PC-9 (cell line): ENCODE measurements at regions of chr6 and their contacts with region 1.

Region 1: GRCh38 chr6:18264219-18264922 is at the start of gene DEK:
- DNase-seq: peak; percentile 56 to 84
- H3K4me3 ChIP-seq: peak within 1 kb of the TSS; percentile 97
- H3K27ac ChIP-seq: peak within 1 kb of the TSS; percentile 73
- H3K4me1 ChIP-seq: peaks cover 41% of the 10 kb centered on the region
- H3K27me3 ChIP-seq: no peaks in the 10 kb centered on the region
- CTCF ChIP-seq: peak; percentile 53; the same call in 1 of the 2 replicates
- total RNA-seq, gene DEK: 192 and 260 TPM in 2 replicates

Region 2: DNA sequence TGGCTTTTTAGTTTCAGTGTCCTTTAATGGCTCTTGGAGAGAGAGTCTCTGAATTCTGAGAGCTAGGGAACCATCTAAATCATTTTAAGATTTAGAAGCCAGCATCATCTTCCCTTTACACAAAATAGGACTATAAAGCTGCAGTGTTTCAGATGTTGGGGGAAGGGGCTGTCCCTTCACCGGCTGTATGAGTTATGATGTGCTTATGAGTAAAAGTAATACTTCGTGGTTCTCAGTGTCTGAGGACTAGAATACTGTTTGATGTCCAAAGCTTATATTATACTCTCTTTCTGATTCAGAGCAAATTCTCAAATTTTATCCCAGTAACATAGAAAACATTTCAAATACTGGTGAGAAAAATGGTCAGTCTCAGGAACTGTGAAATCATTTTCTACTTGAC is 727.8 kb before region 1 on chr6:
- CTCF ChIA-PET with region 1: interaction called, 11 read pairs
- POLR2A ChIA-PET with region 1: no interaction called
- intact Hi-C with region 1: no loop called
- DNase-seq: no peak
- H3K4me3 ChIP-seq: no peak overlapping the region
- H3K27ac ChIP-seq: no peak overlapping the region
- H3K4me1 ChIP-seq: no peaks in the 10 kb centered on the region
- H3K27me3 ChIP-seq: no peaks in the 10 kb centered on the region
- CTCF ChIP-seq: no peak

Region 3: GRCh38 chr6:17790489-17790888 is 473.9 kb before region 1 on chr6:
- CTCF ChIA-PET with region 1: no interaction called
- POLR2A ChIA-PET with region 1: no interaction called
- intact Hi-C with region 1: no loop called
- DNase-seq: no peak
- H3K4me3 ChIP-seq: no peak overlapping the region
- H3K27ac ChIP-seq: no peak overlapping the region
- H3K4me1 ChIP-seq: no peaks in the 10 kb centered on the region
- H3K27me3 ChIP-seq: no peaks in the 10 kb centered on the region
- CTCF ChIP-seq: no peak

Region 4: DNA sequence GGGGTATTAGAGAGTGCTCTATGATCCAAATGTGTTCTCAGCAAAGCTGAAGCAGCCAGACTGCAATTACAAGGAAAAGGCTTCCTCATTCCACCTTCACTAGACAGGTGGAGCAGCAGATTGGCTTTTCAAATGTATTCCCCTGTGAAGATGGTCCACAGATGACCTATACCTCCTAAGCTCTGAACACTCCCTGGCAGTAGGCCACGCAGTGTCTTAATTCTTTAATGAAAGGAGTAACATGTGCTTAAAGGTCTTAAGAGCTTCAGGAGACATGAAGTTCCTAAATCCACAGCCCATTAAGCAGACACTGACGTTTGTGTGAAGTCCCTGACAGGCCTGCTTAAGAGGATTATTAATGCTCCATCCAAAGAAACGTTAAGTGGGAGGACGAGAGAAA is 418.8 kb before region 1 on chr6:
- CTCF ChIA-PET with region 1: no interaction called
- POLR2A ChIA-PET with region 1: no interaction called
- intact Hi-C with region 1: no loop called
- DNase-seq: no peak
- H3K4me3 ChIP-seq: no peak overlapping the region
- H3K27ac ChIP-seq: no peak overlapping the region
- H3K4me1 ChIP-seq: no peaks in the 10 kb centered on the region
- H3K27me3 ChIP-seq: no peaks in the 10 kb centered on the region
- CTCF ChIP-seq: no peak

Region 5: GRCh38 chr6:18155150-18155863 is 109.1 kb before region 1 on chr6 and contains the start of gene KDM1B:
- CTCF ChIA-PET with region 1: no interaction called
- POLR2A ChIA-PET with region 1: no interaction called
- intact Hi-C with region 1: loop called (anchors 1 kb)
- DNase-seq: peak; percentile 88 to 99
- H3K4me3 ChIP-seq: peak within 1 kb of the TSS; percentile 95
- H3K27ac ChIP-seq: peak within 1 kb of the TSS; percentile 35
- H3K4me1 ChIP-seq: peaks cover 25% of the 10 kb centered on the region
- H3K27me3 ChIP-seq: no peaks in the 10 kb centered on the region
- CTCF ChIP-seq: no peak
- total RNA-seq, gene KDM1B: 15.6 and 21.5 TPM in 2 replicates

Region 6: GRCh38 chr6:18280079-18280478 is 15.7 kb after region 1 on chr6:
- CTCF ChIA-PET with region 1: no interaction called
- POLR2A ChIA-PET with region 1: no interaction called
- intact Hi-C with region 1: no loop called
- DNase-seq: peak; percentile 33 to 64
- H3K4me3 ChIP-seq: no peak overlapping the region
- H3K27ac ChIP-seq: no peak overlapping the region
- H3K4me1 ChIP-seq: peaks cover 12% of the 10 kb centered on the region; the same call in 1 of the 2 replicates
- H3K27me3 ChIP-seq: no peaks in the 10 kb centered on the region
- CTCF ChIP-seq: no peak

Region 7: GRCh38 chr6:18323935-18324705 is 59.7 kb after region 1 on chr6:
- CTCF ChIA-PET with region 1: no interaction called
- POLR2A ChIA-PET with region 1: no interaction called
- intact Hi-C with region 1: loop called (anchors 2 kb)
- DNase-seq: peak; percentile 27 to 51
- H3K4me3 ChIP-seq: no peak overlapping the region
- H3K27ac ChIP-seq: no peak overlapping the region
- H3K4me1 ChIP-seq: no peaks in the 10 kb centered on the region
- H3K27me3 ChIP-seq: no peaks in the 10 kb centered on the region
- CTCF ChIP-seq: peak; percentile 85

Region 8: DNA sequence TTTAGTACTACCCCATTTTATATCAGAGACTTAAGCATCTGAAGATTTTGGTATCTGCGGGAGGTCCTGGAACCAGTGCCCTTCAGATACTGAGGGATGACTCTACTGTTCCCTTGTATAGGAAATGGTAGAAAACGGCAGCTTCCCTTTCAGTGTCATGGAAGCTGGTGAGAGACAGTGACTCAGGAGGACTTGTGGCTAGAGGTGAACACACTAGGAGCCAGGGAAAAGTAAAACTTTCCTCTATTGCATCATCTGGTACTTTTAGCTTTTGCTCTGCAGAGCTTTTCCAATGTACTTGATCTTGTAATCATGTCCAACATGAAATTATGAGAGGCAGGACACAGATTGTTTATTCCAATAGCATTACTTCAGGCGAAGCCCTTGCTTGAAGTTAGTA is 167.8 kb after region 1 on chr6:
- CTCF ChIA-PET with region 1: no interaction called
- POLR2A ChIA-PET with region 1: no interaction called
- intact Hi-C with region 1: loop called (anchors 5 kb)
- DNase-seq: peak in 1 of 2 experiments; percentile 51
- H3K4me3 ChIP-seq: no peak overlapping the region
- H3K27ac ChIP-seq: peak overlapping the region; percentile 89
- H3K4me1 ChIP-seq: peaks cover 50% of the 10 kb centered on the region
- H3K27me3 ChIP-seq: no peaks in the 10 kb centered on the region
- CTCF ChIP-seq: no peak

Region 9: DNA sequence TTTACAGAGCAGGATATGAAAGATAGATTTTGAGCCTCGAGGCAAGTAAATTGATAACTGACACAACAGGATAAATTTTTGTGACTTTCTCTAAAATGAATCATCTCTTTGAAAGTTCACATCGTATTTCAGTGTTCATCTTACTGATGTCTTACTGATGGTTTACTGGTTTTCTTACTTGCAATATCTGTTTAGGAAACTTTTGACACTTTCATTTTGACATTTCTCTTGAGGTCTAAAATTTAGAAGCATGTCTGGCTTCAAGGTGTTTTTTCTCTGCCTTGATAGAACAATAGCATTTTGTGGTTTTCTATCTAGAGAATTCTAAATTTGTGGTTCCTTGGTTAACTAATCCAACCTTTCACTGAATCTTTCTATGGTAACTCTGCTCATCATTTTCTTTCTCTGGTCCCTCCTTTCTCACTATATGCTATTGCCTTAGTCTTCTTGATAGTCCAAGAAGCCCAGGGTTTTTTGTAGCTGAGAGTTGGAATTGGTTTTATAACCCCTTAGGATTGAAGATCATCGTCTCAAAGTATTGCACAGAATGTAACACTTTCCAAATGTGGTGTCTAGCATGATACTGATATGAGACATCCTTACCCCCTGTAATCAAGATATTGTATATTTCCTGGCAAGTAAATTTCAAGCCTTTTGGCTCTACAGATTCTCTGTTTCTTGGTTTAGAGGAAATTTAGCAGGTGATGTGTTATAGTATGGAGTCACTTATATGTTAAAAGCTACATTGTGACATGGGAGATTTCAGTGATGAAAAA is 221.5 kb after region 1 on chr6:
- CTCF ChIA-PET with region 1: no interaction called
- POLR2A ChIA-PET with region 1: no interaction called
- intact Hi-C with region 1: no loop called
- DNase-seq: no peak
- H3K4me3 ChIP-seq: no peak overlapping the region
- H3K27ac ChIP-seq: no peak overlapping the region
- H3K4me1 ChIP-seq: no peaks in the 10 kb centered on the region
- H3K27me3 ChIP-seq: no peaks in the 10 kb centered on the region
- CTCF ChIP-seq: no peak

Region 10: DNA sequence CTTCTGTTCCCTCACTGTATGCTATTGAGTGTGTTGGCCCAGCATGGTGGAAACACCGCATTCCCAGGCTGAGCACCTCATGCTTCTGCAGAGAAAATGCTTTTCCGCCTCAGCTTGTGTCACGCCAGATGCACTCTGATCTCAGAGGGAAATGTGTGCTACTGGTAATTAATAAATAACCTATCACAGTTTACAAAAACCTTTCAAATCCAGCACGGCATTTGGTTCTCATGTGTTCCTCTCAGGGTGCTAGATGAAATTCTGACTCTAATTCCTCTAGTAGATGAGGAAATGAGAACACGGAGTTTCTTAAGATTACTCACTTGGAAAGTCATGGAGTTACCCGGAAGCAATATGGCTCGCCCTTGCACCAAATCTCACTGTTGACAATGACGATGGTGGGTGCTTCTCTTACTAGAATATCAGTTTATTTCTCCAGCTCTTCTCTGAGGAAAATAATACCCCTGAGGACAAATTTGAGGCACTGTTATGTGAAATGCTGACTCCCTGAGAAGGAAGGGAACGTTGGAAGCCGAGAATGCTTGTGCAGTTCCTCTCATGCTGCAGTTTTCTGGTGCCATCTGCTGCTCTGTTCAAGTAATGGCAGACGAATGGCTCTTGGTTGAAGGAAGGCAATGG is 239.3 kb after region 1 on chr6:
- CTCF ChIA-PET with region 1: no interaction called
- POLR2A ChIA-PET with region 1: no interaction called
- intact Hi-C with region 1: loop called (anchors 1 kb)
- DNase-seq: peak; percentile 61 to 63
- H3K4me3 ChIP-seq: peak overlapping the region; percentile 17; the same call in 1 of the 2 replicates
- H3K27ac ChIP-seq: no peak overlapping the region
- H3K4me1 ChIP-seq: peaks cover 12% of the 10 kb centered on the region; the same call in 1 of the 2 replicates
- H3K27me3 ChIP-seq: no peaks in the 10 kb centered on the region
- CTCF ChIP-seq: peak; percentile 95